CD4-positive, alpha-beta memory T cell (primary cell): ENCODE measurements at regions of chr14 and their contacts with region 1.

Region 1: DNA sequence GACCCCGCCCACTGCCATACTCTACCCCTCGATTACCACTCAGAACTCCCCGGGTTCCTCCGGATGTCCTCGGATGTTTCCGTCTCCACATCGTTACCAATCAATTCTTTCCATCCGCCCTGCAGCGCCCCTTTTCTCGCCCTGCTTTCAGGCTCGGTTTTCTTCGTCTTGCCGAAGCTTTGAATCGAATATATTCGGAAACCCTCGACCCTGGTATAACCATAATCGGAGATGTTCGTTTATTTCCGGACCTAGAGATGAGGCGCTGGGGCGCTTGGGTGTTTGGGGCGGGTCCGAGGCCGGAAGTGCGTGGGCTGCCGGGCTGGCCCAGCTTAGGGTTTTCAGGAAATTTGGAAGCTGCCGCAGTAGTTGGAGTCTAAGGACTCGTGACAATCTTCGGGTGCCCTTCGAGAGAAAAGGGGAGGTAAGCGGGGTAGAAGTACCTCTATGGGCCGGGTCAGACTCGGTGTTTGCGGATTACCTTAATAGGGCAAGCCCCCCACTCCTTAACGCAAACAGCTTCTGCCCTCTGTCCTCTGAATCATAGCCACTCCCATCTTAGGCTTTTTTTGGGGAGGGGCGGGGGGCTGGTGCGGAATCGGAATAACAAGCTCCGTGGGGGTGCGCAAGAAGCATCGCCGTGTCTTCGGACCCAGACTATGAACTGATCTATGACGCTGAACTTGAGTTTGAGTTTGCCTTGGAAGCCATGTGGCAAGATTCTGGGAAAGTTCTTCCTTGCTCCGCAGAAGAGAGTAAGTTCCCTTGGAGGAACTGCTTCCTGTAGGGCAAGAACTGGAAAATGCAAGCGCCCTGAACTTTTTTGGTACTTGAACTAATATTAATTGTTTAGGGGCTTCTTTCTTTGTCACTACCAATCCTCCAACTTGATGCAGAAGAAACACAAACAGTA is at the start of gene C14orf119:
- DNase-seq: peak; percentile 99 to 100 (median 100)
- H3K4me3 ChIP-seq: peak within 1 kb of the TSS; percentile 90 to 91
- H3K4me3 Mint-ChIP-seq: no peak within 1 kb of the TSS
- H3K27ac ChIP-seq: peak within 1 kb of the TSS; percentile 94
- H3K27ac Mint-ChIP-seq: no peak within 1 kb of the TSS
- H3K4me1 ChIP-seq: peaks cover 45% of the 10 kb centered on the region
- H3K4me1 Mint-ChIP-seq: peaks cover 17 to 31% (median 24%) of the 10 kb centered on the region in 4 donors
- H3K27me3 ChIP-seq: no peaks in the 10 kb centered on the region
- H3K27me3 Mint-ChIP-seq: no peaks in the 10 kb centered on the region
- total RNA-seq, gene C14orf119: 49.7 to 54.0 TPM

Region 2: DNA sequence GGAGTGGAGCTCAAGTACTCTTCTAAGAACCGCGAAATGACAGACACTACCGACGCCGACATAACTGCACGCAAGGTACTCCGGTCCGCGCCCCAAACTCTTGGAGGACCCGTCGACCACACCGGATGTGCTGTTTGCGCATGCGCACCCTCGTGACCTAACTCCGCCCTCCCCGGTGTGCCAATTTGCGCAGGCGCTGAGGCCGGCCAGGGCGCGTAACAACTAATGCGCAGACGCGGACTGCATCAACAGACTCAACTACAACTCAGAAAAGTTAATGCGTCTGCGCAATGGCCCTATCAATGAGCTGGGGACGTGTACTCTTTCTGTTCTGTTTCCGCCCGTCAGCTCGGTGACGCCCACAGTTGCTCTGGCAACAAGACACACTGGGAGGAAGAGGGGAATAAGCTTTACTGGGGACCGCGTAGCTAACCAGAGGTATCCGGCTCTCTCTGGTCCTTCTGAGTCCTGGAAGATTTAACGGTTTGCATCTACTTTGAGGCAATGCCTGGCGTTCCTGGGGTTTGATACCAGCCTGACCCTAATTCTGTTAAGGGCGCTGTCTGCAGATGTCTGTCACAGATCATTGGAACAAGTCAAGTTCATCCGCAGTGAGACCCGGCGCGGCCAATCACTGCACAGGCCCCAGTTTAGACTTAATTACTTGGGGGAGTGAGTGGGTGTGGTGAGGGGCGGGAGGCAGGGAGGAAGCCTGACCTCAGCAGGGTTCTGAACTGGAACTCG is 506.2 kb before region 1 on chr14 and contains the start of gene DAD1:
- CTCF ChIA-PET with region 1: no interaction called
- POLR2A ChIA-PET with region 1: interaction called, 10 read pairs
- intact Hi-C with region 1: loop called (anchors 1 kb)
- DNase-seq: peak; percentile 100
- H3K4me3 ChIP-seq: peak within 1 kb of the TSS; percentile 85 to 87
- H3K4me3 Mint-ChIP-seq: peak within 1 kb of the TSS; percentile 92 to 100 (median 97)
- H3K27ac ChIP-seq: peak within 1 kb of the TSS; percentile 88
- H3K27ac Mint-ChIP-seq: peak within 1 kb of the TSS; percentile 99 to 100 (median 99)
- H3K4me1 ChIP-seq: peaks cover 50% of the 10 kb centered on the region
- H3K4me1 Mint-ChIP-seq: peaks cover 39 to 63% (median 51%) of the 10 kb centered on the region in 4 donors
- H3K27me3 ChIP-seq: no peaks in the 10 kb centered on the region
- H3K27me3 Mint-ChIP-seq: peaks cover 2% of the 10 kb centered on the region in 2 donors
- total RNA-seq, gene DAD1: 110 to 124 TPM

Region 3: GRCh38 chr14:22918804-22919600 is 176.4 kb before region 1 on chr14 and contains the start of gene RBM23:
- CTCF ChIA-PET with region 1: no interaction called
- POLR2A ChIA-PET with region 1: interaction called, 4 read pairs
- intact Hi-C with region 1: loop called (anchors 1 kb)
- DNase-seq: peak; percentile 99 to 100 (median 100)
- H3K4me3 ChIP-seq: peak within 1 kb of the TSS; percentile 67 to 93
- H3K4me3 Mint-ChIP-seq: peak within 1 kb of the TSS; percentile 94 to 99 (median 96)
- H3K27ac ChIP-seq: peak within 1 kb of the TSS; percentile 98
- H3K27ac Mint-ChIP-seq: peak within 1 kb of the TSS; percentile 99 to 100 (median 100)
- H3K4me1 ChIP-seq: peaks cover 40% of the 10 kb centered on the region
- H3K4me1 Mint-ChIP-seq: peaks cover 13 to 56% (median 33%) of the 10 kb centered on the region in 4 donors
- H3K27me3 ChIP-seq: no peaks in the 10 kb centered on the region
- H3K27me3 Mint-ChIP-seq: peaks cover 0 to 4% of the 10 kb centered on the region in 2 donors
- total RNA-seq, gene RBM23: 119 to 123 TPM

Region 4: GRCh38 chr14:23034483-23035302 is 60.8 kb before region 1 on chr14 and contains the start of gene PSMB5:
- CTCF ChIA-PET with region 1: no interaction called
- POLR2A ChIA-PET with region 1: interaction called, 9 read pairs
- intact Hi-C with region 1: loop called (anchors 1 kb)
- DNase-seq: peak; percentile 93 to 96 (median 93)
- H3K4me3 ChIP-seq: peak within 1 kb of the TSS; percentile 66 to 90
- H3K4me3 Mint-ChIP-seq: peak within 1 kb of the TSS; percentile 87 to 98 (median 93)
- H3K27ac ChIP-seq: peak within 1 kb of the TSS; percentile 89
- H3K27ac Mint-ChIP-seq: peak within 1 kb of the TSS; percentile 89 to 99 (median 98)
- H3K4me1 ChIP-seq: peaks cover 19% of the 10 kb centered on the region
- H3K4me1 Mint-ChIP-seq: peaks cover 17 to 43% (median 31%) of the 10 kb centered on the region in 4 donors
- H3K27me3 ChIP-seq: no peaks in the 10 kb centered on the region
- H3K27me3 Mint-ChIP-seq: no peaks in the 10 kb centered on the region
- total RNA-seq, gene PSMB5: 31.4 to 33.6 TPM

Region 5: GRCh38 chr14:23076785-23077408 is 18.6 kb before region 1 on chr14:
- CTCF ChIA-PET with region 1: interaction called, 37 read pairs
- POLR2A ChIA-PET with region 1: interaction called, 29 read pairs
- intact Hi-C with region 1: no loop called
- DNase-seq: peak in 4 of 5 donors; percentile 25 to 42 (median 38)
- H3K4me3 ChIP-seq: no peak overlapping the region
- H3K4me3 Mint-ChIP-seq: no peak overlapping the region
- H3K27ac ChIP-seq: no peak overlapping the region
- H3K27ac Mint-ChIP-seq: peak overlapping the region in 3 of 7 donors; percentile 16 to 70 (median 57)
- H3K4me1 ChIP-seq: peaks cover 5% of the 10 kb centered on the region
- H3K4me1 Mint-ChIP-seq: peaks cover 6 to 15% (median 10%) of the 10 kb centered on the region in 4 donors
- H3K27me3 ChIP-seq: no peaks in the 10 kb centered on the region
- H3K27me3 Mint-ChIP-seq: no peaks in the 10 kb centered on the region

Region 6: DNA sequence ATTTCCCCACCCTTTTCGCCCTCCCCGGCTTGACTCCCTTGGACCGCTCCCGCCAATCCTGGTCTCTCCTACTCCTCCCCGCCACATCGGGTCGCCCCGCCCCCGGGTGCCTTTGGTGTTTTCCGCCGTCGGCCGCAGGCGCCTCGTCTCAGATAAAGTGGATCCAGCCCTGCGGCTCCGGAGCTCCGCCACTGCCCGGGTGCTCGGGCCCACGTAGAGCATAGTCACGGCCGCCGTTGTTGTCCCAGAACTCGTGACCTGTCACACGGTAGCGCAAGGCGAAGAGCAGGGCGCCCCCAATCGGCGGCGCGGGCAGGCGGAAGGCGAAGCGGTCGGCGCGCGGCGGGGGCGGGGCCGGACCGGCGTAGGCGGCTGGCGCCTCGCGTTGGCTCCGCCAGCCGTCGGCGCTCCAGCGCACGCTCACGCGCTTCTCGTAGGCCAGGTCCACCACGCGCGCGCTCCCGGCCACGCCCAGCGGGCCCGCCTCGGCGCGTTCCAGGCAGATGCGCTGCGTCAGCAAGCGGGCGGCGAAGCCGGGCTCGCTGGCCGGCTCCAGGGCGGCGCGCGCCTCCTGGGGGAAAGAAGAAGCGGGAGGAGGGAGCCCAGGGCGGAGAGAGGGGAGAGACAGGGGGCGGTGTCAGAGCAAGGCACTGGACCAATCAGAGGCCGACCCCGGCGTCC is 206.0 kb after region 1 on chr14:
- CTCF ChIA-PET with region 1: interaction called, 3 read pairs
- POLR2A ChIA-PET with region 1: interaction called, 37 read pairs
- intact Hi-C with region 1: loop called (anchors 1 kb)
- DNase-seq: peak; percentile 95 to 99 (median 98)
- H3K4me3 ChIP-seq: peak overlapping the region; percentile 86 to 90
- H3K4me3 Mint-ChIP-seq: peak overlapping the region; percentile 89 to 100 (median 90)
- H3K27ac ChIP-seq: peak overlapping the region; percentile 87
- H3K27ac Mint-ChIP-seq: peak overlapping the region; percentile 92 to 99 (median 96)
- H3K4me1 ChIP-seq: peaks cover 14% of the 10 kb centered on the region
- H3K4me1 Mint-ChIP-seq: peaks cover 14 to 29% (median 23%) of the 10 kb centered on the region in 4 donors
- H3K27me3 ChIP-seq: no peaks in the 10 kb centered on the region
- H3K27me3 Mint-ChIP-seq: peaks cover 8 to 9% of the 10 kb centered on the region in 2 donors

Region 7: DNA sequence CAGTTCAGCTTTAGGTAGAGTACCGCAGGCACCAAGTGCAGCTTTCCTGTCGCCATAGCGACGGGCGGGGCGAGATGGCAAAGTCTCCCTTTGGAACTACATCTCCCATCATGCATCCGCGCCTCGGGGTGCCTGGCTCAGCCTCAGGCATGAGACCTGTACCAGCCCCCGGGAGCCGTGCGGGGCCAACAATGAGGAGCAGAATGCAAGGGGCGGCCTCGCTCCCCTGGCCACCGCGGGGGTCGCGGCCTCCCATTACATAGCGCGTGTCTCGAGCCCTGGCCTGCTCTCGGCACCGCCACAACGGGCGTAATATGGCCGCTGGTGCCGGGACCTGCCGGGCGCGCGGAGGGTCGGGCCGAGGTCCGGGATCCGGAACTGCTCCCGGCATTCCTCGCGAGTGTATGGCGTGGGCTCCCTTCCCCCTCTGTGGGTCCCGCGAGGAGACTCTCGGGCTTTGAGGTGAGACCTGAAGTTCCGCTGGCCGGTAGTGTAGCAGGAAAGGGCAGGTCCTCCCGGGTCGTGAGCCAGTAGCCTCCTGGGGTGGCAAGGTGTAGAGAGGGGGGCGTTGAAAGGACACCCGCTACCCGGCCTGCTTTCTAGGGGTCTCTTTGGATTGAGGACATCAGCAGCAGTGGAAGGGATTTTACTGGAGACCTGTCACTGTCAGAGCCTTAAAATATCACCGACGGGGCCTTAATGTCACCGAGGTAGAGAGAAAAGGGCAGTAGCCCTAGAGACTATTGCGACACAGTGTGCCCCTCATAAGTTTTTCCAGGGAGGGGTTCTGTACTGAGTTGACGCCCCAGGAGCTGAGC is 460.6 kb after region 1 on chr14 and contains the start of gene THTPA:
- CTCF ChIA-PET with region 1: no interaction called
- POLR2A ChIA-PET with region 1: no interaction called
- intact Hi-C with region 1: loop called (anchors 10 kb)
- DNase-seq: peak; percentile 90 to 97 (median 92)
- H3K4me3 ChIP-seq: peak within 1 kb of the TSS; percentile 84 to 97
- H3K4me3 Mint-ChIP-seq: peak within 1 kb of the TSS; percentile 95 to 99 (median 96)
- H3K27ac ChIP-seq: peak within 1 kb of the TSS; percentile 86
- H3K27ac Mint-ChIP-seq: peak within 1 kb of the TSS; percentile 82 to 98 (median 97)
- H3K4me1 ChIP-seq: peaks cover 33% of the 10 kb centered on the region
- H3K4me1 Mint-ChIP-seq: peaks cover 15 to 44% (median 28%) of the 10 kb centered on the region in 4 donors
- H3K27me3 ChIP-seq: no peaks in the 10 kb centered on the region
- H3K27me3 Mint-ChIP-seq: peaks cover 0 to 2% of the 10 kb centered on the region in 2 donors
- total RNA-seq, gene THTPA: 25.6 to 26.2 TPM